AG04450 (cell line): ENCODE measurements at regions of chr18 and their contacts with region 1.

Region 1: GRCh38 chr18:54983041-54983686 is 23.9 kb upstream of the CCDC68 start:
- DNase-seq: peak; percentile 37
- H3K4me3 ChIP-seq: no peak overlapping the region
- H3K27ac ChIP-seq: no peak overlapping the region
- H3K27me3 ChIP-seq: no peaks in the 10 kb centered on the region
- CTCF ChIP-seq: peak; percentile 60

Region 2: GRCh38 chr18:54558609-54559585 is 424.3 kb before region 1 on chr18:
- CTCF ChIA-PET with region 1: interaction called, 11 read pairs
- POLR2A ChIA-PET with region 1: no interaction called
- DNase-seq: no peak
- H3K4me3 ChIP-seq: no peak overlapping the region
- H3K27ac ChIP-seq: no peak overlapping the region
- H3K27me3 ChIP-seq: no peaks in the 10 kb centered on the region
- CTCF ChIP-seq: peak; percentile 71

Region 3: GRCh38 chr18:54679318-54680149 is 303.6 kb before region 1 on chr18:
- CTCF ChIA-PET with region 1: interaction called, 131 read pairs
- POLR2A ChIA-PET with region 1: no interaction called
- DNase-seq: peak; percentile 61
- H3K4me3 ChIP-seq: no peak overlapping the region
- H3K27ac ChIP-seq: no peak overlapping the region
- H3K27me3 ChIP-seq: no peaks in the 10 kb centered on the region
- CTCF ChIP-seq: peak; percentile 72

Region 4: GRCh38 chr18:54690198-54690597 is 293.0 kb before region 1 on chr18:
- CTCF ChIA-PET with region 1: interaction called, 47 read pairs
- POLR2A ChIA-PET with region 1: no interaction called
- DNase-seq: no peak
- H3K4me3 ChIP-seq: no peak overlapping the region; the same call in 1 of the 2 replicates
- H3K27ac ChIP-seq: no peak overlapping the region
- H3K27me3 ChIP-seq: no peaks in the 10 kb centered on the region
- CTCF ChIP-seq: no peak

Region 5: DNA sequence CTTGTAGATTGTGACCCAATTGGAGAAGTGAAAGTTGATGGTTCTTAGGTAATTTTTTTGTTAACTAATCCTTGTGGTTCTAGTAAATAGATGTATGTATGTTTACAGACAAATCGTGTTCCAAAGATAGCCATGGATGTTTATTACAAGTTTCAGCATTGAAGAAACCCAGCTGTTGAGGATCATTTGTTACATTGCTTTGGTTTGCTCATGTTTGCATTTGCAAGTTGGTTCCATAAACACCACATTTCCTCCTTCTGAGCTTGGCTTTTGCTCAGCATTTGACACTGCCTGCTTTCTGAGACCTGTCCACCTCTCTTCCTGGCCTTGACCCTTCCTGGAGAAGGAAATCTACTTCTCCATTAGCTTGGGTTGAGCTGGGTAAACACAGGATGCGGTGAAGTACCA is 22.1 kb before region 1 on chr18:
- CTCF ChIA-PET with region 1: interaction called, 25 read pairs
- POLR2A ChIA-PET with region 1: no interaction called
- DNase-seq: peak; percentile 79
- H3K4me3 ChIP-seq: no peak overlapping the region
- H3K27ac ChIP-seq: peak overlapping the region; percentile 32
- H3K27me3 ChIP-seq: no peaks in the 10 kb centered on the region
- CTCF ChIP-seq: no peak

Region 6: GRCh38 chr18:55003695-55004094 is 20.5 kb after region 1 on chr18:
- CTCF ChIA-PET with region 1: interaction called, 13 read pairs
- POLR2A ChIA-PET with region 1: no interaction called
- DNase-seq: no peak
- H3K4me3 ChIP-seq: no peak overlapping the region
- H3K27ac ChIP-seq: no peak overlapping the region
- H3K27me3 ChIP-seq: no peaks in the 10 kb centered on the region
- CTCF ChIP-seq: no peak

Region 7: GRCh38 chr18:55152801-55153200 is 169.6 kb after region 1 on chr18:
- CTCF ChIA-PET with region 1: no interaction called
- POLR2A ChIA-PET with region 1: no interaction called
- DNase-seq: no peak
- H3K4me3 ChIP-seq: no peak overlapping the region
- H3K27ac ChIP-seq: no peak overlapping the region
- H3K27me3 ChIP-seq: peaks cover 6% of the 10 kb centered on the region
- CTCF ChIP-seq: no peak